ENCODE measurements at regions of chr14 and their contacts with region 1.

Region 1: GRCh38 chr14:67704484-67705089 is 2.9 kb downstream of the RDH12 start:
- DNase-seq: peak in 1 of 2 donors; percentile 82
- ATAC-seq: peak; percentile 81 to 88 (median 82)
- H3K4me3 ChIP-seq: no peak overlapping the region
- H3K4me3 Mint-ChIP-seq: no peak overlapping the region
- H3K27ac ChIP-seq: no peak overlapping the region
- H3K27ac Mint-ChIP-seq: no peak overlapping the region
- H3K4me1 ChIP-seq: no peaks in the 10 kb centered on the region
- H3K4me1 Mint-ChIP-seq: no peaks in the 10 kb centered on the region
- H3K27me3 ChIP-seq: no peaks in the 10 kb centered on the region
- H3K27me3 Mint-ChIP-seq: peaks cover 6 to 16% of the 10 kb centered on the region in 2 donors
- CTCF ChIP-seq: peak; percentile 68

Region 2: DNA sequence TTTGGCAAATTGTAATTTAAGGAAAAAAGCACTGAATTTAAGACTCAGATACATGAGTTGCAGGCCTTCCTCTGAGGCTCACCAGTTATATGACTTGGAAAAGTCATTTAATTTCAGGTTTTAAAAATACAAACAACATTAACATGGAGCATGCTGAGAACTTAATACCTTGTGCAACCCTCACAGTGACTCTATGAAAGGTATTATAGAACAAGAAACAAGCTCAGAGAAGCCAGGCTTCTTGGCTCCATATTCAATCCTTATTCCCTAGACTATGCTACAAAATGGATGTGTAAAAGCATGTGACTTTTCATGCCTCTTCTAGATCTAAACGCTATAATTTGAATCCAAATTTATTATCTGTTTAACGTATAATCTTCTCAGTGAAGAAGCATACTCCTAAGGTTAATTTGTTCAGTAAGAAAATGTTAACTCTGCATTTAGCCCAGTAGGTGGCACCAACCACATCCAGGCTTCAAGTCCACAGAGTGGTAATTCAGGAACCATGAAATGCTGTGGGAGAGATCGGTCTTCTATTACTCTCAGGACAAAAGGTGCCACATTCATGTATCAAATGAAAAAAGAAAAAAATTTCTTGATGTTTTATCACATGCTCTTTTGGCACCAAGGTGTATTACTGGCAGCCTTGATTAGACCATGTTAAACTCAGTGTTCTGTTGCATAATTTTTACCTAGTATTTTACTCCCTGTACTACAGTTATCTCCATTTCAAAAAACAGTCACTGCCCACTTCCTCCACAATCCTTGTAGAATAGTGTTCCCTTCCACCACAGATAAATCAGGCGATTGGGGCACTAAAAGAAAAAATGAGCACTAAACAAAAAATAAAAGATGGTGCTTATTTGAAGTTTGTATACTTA is 1209.1 kb before region 1 on chr14:
- intact Hi-C with region 1: loop called (anchors 10 kb)
- DNase-seq: peak in 1 of 2 donors; percentile 75
- ATAC-seq: peak in 2 of 3 donors; percentile 64 to 76
- H3K4me3 ChIP-seq: no peak overlapping the region
- H3K4me3 Mint-ChIP-seq: no peak overlapping the region
- H3K27ac ChIP-seq: no peak overlapping the region
- H3K27ac Mint-ChIP-seq: no peak overlapping the region
- H3K4me1 ChIP-seq: no peaks in the 10 kb centered on the region
- H3K4me1 Mint-ChIP-seq: no peaks in the 10 kb centered on the region
- H3K27me3 ChIP-seq: no peaks in the 10 kb centered on the region
- H3K27me3 Mint-ChIP-seq: peaks cover 7 to 8% of the 10 kb centered on the region in 2 donors
- CTCF ChIP-seq: peak; percentile 64

Region 3: GRCh38 chr14:67426983-67427606 is 277.5 kb before region 1 on chr14:
- intact Hi-C with region 1: loop called (anchors 1 kb)
- DNase-seq: peak; percentile 65 to 89
- ATAC-seq: peak; percentile 87 to 99 (median 98)
- H3K4me3 ChIP-seq: no peak overlapping the region
- H3K4me3 Mint-ChIP-seq: no peak overlapping the region
- H3K27ac ChIP-seq: no peak overlapping the region
- H3K27ac Mint-ChIP-seq: no peak overlapping the region
- H3K4me1 ChIP-seq: peaks cover 6% of the 10 kb centered on the region
- H3K4me1 Mint-ChIP-seq: no peaks in the 10 kb centered on the region
- H3K27me3 ChIP-seq: no peaks in the 10 kb centered on the region
- H3K27me3 Mint-ChIP-seq: peaks cover 18 to 19% of the 10 kb centered on the region in 2 donors
- CTCF ChIP-seq: peak; percentile 90

Region 4: DNA sequence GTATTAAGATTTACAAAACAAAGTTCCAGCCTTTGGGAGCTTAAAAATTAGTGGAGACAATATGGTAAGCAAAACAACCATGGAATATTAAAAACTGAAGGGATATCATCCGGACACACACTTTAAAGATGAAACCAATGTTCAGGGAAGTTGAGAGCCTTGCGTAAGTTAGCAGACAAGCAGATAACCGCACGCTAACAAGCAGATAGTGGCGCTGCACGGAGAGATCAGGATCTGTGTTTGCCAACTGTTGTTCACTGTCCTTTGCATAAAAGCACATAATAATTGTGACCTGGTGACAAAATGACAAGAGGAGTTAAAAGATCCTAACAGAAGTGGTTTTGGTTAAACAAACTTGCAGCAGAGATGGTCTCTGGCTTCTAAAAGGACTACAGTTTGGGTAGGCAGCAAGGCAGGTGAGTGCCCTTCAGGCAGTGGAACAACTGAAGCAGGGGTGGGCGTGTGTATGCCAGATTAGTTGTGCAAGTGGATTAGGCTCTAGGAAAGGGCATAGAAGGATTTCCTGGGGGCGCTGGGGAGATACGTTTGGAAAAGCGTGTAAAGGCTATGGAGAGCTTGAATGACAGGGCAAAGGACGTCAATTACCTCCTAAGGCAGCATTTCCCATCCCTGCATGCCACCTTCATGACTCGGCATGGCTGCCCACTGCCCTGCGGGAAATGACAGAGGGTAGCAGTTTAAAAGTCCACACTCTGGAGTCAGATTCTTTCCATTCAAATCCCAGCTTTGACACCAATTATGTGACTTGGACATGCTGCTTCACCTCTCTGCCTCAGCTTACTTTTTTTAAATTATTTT is 201.5 kb before region 1 on chr14:
- intact Hi-C with region 1: no loop called
- DNase-seq: no peak
- ATAC-seq: no peak
- H3K4me3 ChIP-seq: no peak overlapping the region
- H3K4me3 Mint-ChIP-seq: no peak overlapping the region
- H3K27ac ChIP-seq: no peak overlapping the region
- H3K27ac Mint-ChIP-seq: no peak overlapping the region
- H3K4me1 ChIP-seq: no peaks in the 10 kb centered on the region
- H3K4me1 Mint-ChIP-seq: peaks cover 0 to 1% of the 10 kb centered on the region in 2 donors
- H3K27me3 ChIP-seq: no peaks in the 10 kb centered on the region
- H3K27me3 Mint-ChIP-seq: no peaks in the 10 kb centered on the region
- CTCF ChIP-seq: no peak

Region 5: DNA sequence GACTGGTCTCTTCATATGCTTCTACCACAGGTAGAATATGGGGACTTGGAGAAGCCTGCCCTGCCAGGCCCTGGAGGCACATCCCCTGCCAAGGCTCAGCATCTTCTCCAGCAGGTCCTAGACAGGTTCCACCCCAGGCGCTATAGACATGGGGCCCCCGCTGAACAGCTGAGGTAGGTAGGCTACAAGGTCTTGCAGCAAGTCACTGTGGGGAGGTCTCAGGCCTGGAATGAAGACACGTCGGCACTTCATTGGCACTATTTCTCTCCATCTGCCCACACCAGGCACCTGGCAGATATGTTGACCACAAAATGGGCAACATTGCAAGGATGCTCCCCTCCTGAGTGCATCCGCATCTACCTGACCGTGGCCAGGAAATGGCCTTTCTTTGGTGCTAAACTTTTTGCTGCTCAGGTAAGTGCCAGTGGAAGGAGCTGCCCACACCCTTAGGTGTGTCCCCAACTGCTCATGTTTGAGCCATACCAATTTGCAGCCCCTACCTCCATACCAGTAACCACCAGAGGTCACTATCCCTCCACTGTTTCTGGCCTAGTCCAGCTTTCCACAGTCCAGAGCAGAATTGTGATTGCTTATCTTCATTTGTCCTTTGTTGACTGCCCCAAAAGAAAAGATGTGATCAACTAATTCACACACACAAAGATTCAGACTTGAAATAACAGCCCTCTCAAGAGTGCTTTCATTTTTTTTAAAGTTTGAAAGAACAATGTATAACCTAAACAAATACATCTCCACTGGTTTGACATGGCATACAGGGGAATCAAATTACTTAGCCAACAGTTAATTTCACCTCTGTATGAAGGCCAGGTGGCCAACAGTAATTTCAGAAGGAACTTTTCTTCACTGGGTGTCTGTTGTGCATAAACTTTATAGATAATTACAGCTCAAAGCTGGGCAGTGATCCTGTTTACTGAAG is 120.6 kb before region 1 on chr14:
- intact Hi-C with region 1: loop called (anchors 1 kb)
- DNase-seq: peak in 1 of 2 donors; percentile 68
- ATAC-seq: peak; percentile 67 to 77 (median 74)
- H3K4me3 ChIP-seq: no peak overlapping the region
- H3K4me3 Mint-ChIP-seq: no peak overlapping the region
- H3K27ac ChIP-seq: no peak overlapping the region
- H3K27ac Mint-ChIP-seq: no peak overlapping the region
- H3K4me1 ChIP-seq: no peaks in the 10 kb centered on the region
- H3K4me1 Mint-ChIP-seq: no peaks in the 10 kb centered on the region
- H3K27me3 ChIP-seq: no peaks in the 10 kb centered on the region
- H3K27me3 Mint-ChIP-seq: no peaks in the 10 kb centered on the region
- CTCF ChIP-seq: peak; percentile 61

Region 6: DNA sequence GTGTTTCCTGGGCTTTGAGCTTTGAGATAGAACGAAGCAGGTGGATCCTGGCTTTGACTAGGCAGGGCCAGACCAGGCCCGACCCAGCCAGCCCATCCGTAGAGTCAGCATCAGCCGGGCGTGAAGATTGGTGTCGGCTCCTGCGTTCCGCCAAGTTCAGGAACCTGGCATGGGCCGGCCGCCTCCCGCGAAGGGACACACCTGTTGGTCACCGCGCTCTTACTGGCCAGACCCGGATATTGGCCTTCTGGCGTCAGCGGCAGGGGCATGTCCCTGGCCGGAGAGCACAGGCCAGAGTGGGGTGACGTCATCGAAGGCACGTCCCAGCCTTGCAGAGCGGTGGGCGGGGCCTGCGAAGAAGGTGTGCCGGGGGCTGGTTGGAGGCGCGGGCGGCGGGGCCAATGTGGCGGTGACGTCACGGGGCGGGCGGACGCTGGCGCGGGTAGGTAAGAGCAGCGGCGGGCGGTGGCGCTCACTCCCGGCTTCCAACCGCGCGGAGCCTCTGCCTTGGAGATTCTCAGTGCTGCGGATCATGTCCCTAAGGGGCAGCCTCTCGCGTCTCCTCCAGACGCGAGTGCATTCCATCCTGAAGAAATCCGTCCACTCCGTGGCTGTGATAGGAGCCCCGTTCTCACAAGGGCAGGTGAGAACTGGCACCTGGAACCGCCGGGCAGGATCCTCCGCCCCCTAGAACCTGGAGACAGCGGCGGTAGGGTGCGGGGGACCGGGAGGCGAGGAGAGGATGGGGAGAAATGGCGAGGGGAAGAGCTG is 85.0 kb before region 1 on chr14 and contains the start of gene ARG2:
- intact Hi-C with region 1: loop called (anchors 1 kb)
- DNase-seq: peak; percentile 97 to 98
- ATAC-seq: peak; percentile 90 to 98 (median 91)
- H3K4me3 ChIP-seq: peak within 1 kb of the TSS; percentile 83
- H3K4me3 Mint-ChIP-seq: peak within 1 kb of the TSS; percentile 90
- H3K27ac ChIP-seq: peak within 1 kb of the TSS; percentile 92
- H3K27ac Mint-ChIP-seq: peak within 1 kb of the TSS; percentile 95 to 98
- H3K4me1 ChIP-seq: peaks cover 14% of the 10 kb centered on the region
- H3K4me1 Mint-ChIP-seq: peaks cover 21 to 25% of the 10 kb centered on the region in 2 donors
- H3K27me3 ChIP-seq: no peaks in the 10 kb centered on the region
- H3K27me3 Mint-ChIP-seq: peaks cover 0 to 11% of the 10 kb centered on the region in 2 donors
- CTCF ChIP-seq: no peak
- total RNA-seq, gene ARG2: 1.2 to 7.4 (median 1.4) TPM

Region 7: GRCh38 chr14:67666750-67667449 is 37.7 kb before region 1 on chr14:
- intact Hi-C with region 1: loop called (anchors 5 kb)
- DNase-seq: peak in 1 of 2 donors; percentile 78
- ATAC-seq: peak; percentile 59 to 67 (median 65)
- H3K4me3 ChIP-seq: no peak overlapping the region
- H3K4me3 Mint-ChIP-seq: peak overlapping the region; percentile 35
- H3K27ac ChIP-seq: peak overlapping the region; percentile 15
- H3K27ac Mint-ChIP-seq: peak overlapping the region; percentile 85 to 86
- H3K4me1 ChIP-seq: peaks cover 23% of the 10 kb centered on the region
- H3K4me1 Mint-ChIP-seq: peaks cover 68 to 80% of the 10 kb centered on the region in 2 donors
- H3K27me3 ChIP-seq: no peaks in the 10 kb centered on the region
- H3K27me3 Mint-ChIP-seq: no peaks in the 10 kb centered on the region
- CTCF ChIP-seq: peak; percentile 65

Measured in natural killer cell (primary cell).